PC-3 (cell line): ENCODE measurements at regions of chr17 and their contacts with region 1.

Region 1: GRCh38 chr17:57892146-57892828 is 42.4 kb upstream of the MRPS23 start:
- DNase-seq: peak; percentile 97
- ATAC-seq: peak; percentile 43
- H3K4me3 ChIP-seq: no peak overlapping the region
- H3K27ac ChIP-seq: peak overlapping the region; percentile 93
- H3K4me1 ChIP-seq: peaks cover 61% of the 10 kb centered on the region
- H3K27me3 ChIP-seq: no peaks in the 10 kb centered on the region
- CTCF ChIP-seq: peak; percentile 99

Region 2: DNA sequence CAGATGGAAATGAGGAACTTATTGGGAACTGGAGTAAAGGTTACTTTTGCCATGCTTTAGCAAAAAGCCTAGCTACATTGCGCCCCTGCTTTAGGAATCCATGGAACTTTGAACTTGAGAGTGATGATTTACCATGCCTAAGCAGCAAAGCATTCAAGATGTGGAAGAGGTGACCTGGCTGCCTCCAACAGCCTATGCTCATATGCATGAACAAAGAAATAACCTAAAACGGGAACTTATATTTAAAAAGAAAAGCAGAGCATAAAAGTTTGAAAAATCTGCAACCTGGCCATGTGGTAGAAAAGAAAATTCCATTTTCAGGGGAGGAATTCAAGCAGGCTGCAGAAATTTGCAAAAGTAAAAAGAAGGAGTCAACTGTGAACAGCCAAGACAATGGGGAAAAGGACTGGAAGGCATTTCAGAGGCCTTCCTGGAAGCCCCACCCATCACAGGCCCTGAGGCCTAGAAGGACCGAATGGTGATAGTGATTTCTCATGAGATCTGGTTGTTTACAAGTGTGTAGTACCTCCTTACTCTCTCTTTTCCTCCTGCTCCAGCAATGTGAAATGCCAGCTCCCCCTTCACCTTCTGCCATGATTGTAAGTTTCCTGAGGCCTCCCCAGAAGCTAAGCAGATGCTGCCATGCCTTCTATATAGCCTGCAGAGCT is 91.1 kb before region 1 on chr17:
- CTCF ChIA-PET with region 1: no interaction called
- POLR2A ChIA-PET with region 1: interaction called, 10 read pairs
- intact Hi-C with region 1: no loop called
- DNase-seq: no peak
- ATAC-seq: no peak
- H3K4me3 ChIP-seq: no peak overlapping the region
- H3K27ac ChIP-seq: no peak overlapping the region
- H3K4me1 ChIP-seq: no peaks in the 10 kb centered on the region
- H3K27me3 ChIP-seq: peaks cover 20% of the 10 kb centered on the region
- CTCF ChIP-seq: no peak

Region 3: DNA sequence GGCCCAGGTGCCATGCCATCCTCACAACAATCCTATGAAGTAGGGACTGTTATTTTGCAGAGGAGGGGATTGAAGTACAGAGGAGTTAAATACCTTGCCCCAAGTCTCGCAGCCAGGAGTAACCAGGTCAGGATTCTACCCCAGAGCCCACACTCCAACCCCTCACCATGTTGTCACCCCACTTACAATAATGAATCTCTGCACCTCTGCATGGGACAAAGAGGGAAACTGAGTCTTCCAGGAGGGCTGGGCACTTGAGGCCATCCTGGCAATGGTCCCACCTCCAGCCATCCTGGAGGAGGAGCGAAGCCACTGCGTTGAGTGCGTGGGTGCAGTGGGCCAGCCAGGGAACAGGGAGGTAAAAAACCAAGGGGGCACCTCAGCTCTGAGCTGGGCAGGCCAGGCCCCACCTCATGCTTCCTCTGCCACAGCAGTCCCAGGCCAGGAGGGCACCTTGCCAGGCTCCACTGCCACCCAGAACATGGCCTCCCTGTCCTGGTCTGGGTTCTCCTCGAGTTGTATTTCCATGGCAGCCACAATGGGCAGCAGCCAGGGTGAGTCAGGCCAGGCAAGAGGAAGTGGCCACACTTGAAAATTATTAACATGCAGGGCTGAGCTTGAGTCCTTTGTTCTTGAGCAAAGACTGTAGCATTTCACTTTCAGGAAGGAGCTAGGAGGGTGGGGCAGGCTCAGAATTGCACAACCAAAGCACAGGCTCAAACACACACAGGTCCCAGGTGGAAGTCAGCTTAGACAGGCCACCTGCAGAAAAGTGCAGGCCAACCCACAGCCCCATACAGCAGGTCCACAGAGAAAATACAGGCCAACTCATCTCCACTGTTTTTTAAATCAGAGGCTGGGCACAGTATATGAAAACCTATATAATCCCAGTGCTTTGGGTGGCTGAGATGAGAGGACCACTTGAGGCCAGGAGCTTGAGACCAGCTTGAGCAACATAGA is 10.8 kb after region 1 on chr17:
- CTCF ChIA-PET with region 1: interaction called, 3 read pairs
- POLR2A ChIA-PET with region 1: no interaction called
- intact Hi-C with region 1: loop called (anchors 1 kb)
- DNase-seq: peak; percentile 98
- ATAC-seq: peak; percentile 82
- H3K4me3 ChIP-seq: no peak overlapping the region
- H3K27ac ChIP-seq: peak overlapping the region; percentile 96
- H3K4me1 ChIP-seq: peaks cover 64% of the 10 kb centered on the region
- H3K27me3 ChIP-seq: no peaks in the 10 kb centered on the region
- CTCF ChIP-seq: no peak

Region 4: GRCh38 chr17:57927048-57927723 is 34.9 kb after region 1 on chr17:
- CTCF ChIA-PET with region 1: no interaction called
- POLR2A ChIA-PET with region 1: no interaction called
- intact Hi-C with region 1: loop called (anchors 2 kb)
- DNase-seq: peak; percentile 85
- ATAC-seq: peak; percentile 96
- H3K4me3 ChIP-seq: no peak overlapping the region
- H3K27ac ChIP-seq: peak overlapping the region; percentile 68
- H3K4me1 ChIP-seq: peaks cover 32% of the 10 kb centered on the region
- H3K27me3 ChIP-seq: no peaks in the 10 kb centered on the region
- CTCF ChIP-seq: no peak

Region 5: DNA sequence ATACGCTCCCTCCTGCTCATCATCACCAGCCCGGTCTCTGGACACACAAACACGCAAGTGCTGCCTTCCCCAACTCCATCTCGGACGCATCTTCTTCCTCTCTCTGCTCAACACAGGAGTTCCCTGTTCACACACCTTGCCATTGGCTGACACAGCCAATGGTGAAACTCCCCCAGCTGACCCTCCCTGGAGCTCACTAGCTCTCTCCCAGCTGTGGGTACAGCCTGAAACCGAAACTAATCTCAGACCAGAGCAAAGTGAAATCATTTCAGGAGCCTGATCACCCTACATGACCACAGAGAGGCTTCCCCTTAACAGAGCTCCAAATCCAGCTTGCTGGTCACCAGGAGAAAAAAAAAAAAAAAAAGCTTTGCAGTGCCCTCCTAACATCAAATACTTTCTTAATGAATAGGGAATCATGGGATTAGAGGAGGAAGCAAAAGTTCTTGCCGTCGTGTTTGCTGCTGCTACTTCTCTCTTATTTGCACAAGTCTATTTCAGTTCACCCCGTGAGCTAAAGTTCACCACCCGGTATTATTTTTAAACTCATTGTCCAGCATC is 54.6 kb after region 1 on chr17:
- CTCF ChIA-PET with region 1: interaction called, 3 read pairs
- POLR2A ChIA-PET with region 1: interaction called, 3 read pairs
- intact Hi-C with region 1: loop called (anchors 1 kb)
- DNase-seq: peak; percentile 75
- ATAC-seq: peak; percentile 18
- H3K4me3 ChIP-seq: peak overlapping the region; percentile 55
- H3K27ac ChIP-seq: peak overlapping the region; percentile 98
- H3K4me1 ChIP-seq: peaks cover 74% of the 10 kb centered on the region
- H3K27me3 ChIP-seq: no peaks in the 10 kb centered on the region
- CTCF ChIP-seq: no peak

Region 6: DNA sequence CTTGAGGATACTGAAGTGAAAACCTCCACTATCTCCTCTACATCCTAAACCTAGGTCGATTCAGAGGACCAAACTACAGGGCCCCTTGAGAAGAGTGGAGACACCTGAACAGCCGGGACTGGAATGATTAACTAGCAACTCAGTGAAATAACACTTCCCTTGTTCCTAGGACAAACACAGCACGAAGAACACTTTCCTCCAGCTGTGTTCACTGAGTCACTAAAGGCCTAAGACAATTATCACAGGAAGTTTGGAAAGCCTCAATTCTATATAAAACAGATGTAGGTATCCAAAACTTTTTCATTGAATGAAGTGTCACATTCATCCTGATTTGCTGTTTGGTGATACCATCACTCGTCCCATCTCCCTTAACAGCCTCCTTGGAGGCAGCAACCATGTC is 78.4 kb after region 1 on chr17:
- CTCF ChIA-PET with region 1: no interaction called
- POLR2A ChIA-PET with region 1: no interaction called
- intact Hi-C with region 1: no loop called
- DNase-seq: no peak
- ATAC-seq: peak; percentile 65
- H3K4me3 ChIP-seq: no peak overlapping the region
- H3K27ac ChIP-seq: no peak overlapping the region
- H3K4me1 ChIP-seq: no peaks in the 10 kb centered on the region
- H3K27me3 ChIP-seq: no peaks in the 10 kb centered on the region
- CTCF ChIP-seq: no peak

Region 7: GRCh38 chr17:57995076-57995956 is 103.0 kb after region 1 on chr17:
- CTCF ChIA-PET with region 1: interaction called, 4 read pairs
- POLR2A ChIA-PET with region 1: no interaction called
- intact Hi-C with region 1: loop called (anchors 2 kb)
- DNase-seq: peak; percentile 87
- ATAC-seq: peak; percentile 82
- H3K4me3 ChIP-seq: no peak overlapping the region
- H3K27ac ChIP-seq: no peak overlapping the region
- H3K4me1 ChIP-seq: no peaks in the 10 kb centered on the region
- H3K27me3 ChIP-seq: no peaks in the 10 kb centered on the region
- CTCF ChIP-seq: peak; percentile 90